Testis (tissue), 5 donors: ENCODE measurements at regions of chr13 and their contacts with region 1.

Region 1: DNA sequence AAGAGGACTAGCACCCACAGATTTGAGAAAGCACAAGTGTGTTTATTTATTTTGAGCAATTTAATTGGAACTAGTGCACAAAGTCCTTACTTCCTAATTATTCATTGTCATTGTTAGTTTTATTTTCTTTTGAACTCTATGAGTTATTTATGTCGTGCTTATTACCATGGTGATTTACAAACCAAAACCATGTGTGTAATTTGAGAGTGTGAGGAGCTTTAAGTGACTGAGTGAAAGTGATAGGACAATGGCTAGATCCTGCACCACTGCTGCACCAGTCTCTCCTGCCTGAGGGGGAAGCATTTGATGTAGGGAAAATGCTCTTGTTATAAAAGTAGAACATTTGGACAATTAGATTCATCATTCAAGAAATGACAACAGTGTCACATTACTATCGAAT is 172.3 kb upstream of the KLF12 start:
- DNase-seq: no peak
- H3K4me3 ChIP-seq: no peak overlapping the region
- H3K27ac ChIP-seq: no peak overlapping the region
- H3K4me1 ChIP-seq: no peaks in the 10 kb centered on the region
- H3K27me3 ChIP-seq: no peaks in the 10 kb centered on the region
- CTCF ChIP-seq: no peak
- POLR2A ChIP-seq: no peak

Region 2: DNA sequence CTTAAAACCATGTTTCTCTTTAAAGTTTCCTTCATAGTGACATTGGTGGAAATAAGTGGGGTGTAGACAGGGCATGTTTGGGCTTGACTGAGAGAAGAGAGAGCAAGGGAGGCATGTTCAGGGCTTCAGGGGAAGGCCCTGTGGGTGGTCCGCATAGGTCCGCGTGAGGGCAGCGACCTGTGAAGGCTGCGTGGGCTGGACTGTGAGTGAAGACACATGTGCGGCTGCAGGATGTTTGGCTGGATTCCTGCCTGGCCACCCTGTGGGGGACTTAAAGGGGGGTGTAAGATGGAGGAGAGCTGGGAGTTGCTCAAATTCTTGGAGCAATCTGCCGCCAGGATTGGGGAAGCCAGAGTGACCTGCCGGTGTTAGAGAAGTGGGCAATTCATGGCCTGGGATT is 148.5 kb before region 1 on chr13:
- intact Hi-C with region 1: no loop called
- DNase-seq: peak; percentile 42
- H3K4me3 ChIP-seq: no peak overlapping the region
- H3K27ac ChIP-seq: no peak overlapping the region
- H3K4me1 ChIP-seq: no peaks in the 10 kb centered on the region
- H3K27me3 ChIP-seq: no peaks in the 10 kb centered on the region
- CTCF ChIP-seq: no peak
- POLR2A ChIP-seq: no peak

Region 3: DNA sequence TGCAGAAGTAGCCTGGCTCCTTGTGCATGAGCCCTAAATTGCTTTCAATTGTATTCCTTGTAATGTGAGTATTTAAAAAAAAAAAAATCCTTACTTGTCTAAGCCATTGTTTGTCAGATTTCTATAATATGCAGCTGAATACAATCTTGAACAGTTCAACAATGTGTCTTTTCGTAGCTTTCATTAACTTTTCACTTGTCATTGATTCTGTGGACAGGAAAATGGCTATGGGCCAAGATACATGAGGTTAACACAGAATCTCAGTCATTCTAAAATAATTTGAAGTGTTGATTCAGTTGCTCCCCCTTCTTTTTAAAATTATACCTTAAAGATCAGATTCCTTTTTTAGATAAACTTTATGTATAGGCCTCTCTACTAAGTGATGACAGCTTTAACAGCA is 223.5 kb after region 1 on chr13:
- intact Hi-C with region 1: no loop called
- DNase-seq: no peak
- H3K4me3 ChIP-seq: no peak overlapping the region
- H3K27ac ChIP-seq: no peak overlapping the region
- H3K4me1 ChIP-seq: no peaks in the 10 kb centered on the region
- H3K27me3 ChIP-seq: no peaks in the 10 kb centered on the region
- CTCF ChIP-seq: no peak
- POLR2A ChIP-seq: no peak

Region 4: DNA sequence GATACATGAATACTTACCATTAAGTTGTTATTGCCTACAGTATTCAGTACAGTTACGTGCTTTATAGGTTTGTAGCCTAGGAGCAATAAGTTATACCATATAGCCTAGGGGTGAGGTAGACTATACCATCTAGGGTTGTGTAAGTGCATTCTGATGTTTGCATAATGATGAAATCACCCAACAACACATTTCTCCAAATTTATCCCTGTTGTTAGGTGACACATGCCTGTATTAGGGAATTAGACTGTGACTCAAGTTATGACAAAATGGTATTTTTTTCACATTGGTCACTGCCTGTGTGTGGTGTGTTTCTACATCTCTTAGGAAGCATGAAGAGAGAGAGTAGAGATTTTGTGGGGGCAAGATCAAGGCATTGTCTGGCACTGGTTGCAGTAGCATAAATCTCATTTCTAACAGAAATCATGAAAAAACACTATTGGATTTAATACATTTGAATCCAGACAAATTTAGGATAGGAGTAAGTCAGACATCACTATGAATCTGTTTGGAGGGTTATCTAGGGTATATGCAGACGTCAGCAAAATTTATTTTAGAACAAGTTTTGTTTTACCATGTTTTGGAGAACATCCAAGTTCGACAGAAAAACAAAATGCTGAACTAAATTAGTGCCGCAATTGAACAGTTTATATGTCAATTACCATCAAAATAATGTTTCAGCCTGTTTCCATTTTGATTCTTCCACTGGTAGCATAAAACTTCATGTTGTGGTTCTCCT is 1661.8 kb after region 1 on chr13:
- intact Hi-C with region 1: loop called (anchors 5 kb)
- DNase-seq: no peak
- H3K4me3 ChIP-seq: no peak overlapping the region
- H3K27ac ChIP-seq: no peak overlapping the region
- H3K4me1 ChIP-seq: no peaks in the 10 kb centered on the region
- H3K27me3 ChIP-seq: no peaks in the 10 kb centered on the region
- CTCF ChIP-seq: no peak
- POLR2A ChIP-seq: no peak